Right ventricle myocardium superior (tissue), 1 donor: ENCODE measurements at regions of chr1 and their contacts with region 1.

Region 1: DNA sequence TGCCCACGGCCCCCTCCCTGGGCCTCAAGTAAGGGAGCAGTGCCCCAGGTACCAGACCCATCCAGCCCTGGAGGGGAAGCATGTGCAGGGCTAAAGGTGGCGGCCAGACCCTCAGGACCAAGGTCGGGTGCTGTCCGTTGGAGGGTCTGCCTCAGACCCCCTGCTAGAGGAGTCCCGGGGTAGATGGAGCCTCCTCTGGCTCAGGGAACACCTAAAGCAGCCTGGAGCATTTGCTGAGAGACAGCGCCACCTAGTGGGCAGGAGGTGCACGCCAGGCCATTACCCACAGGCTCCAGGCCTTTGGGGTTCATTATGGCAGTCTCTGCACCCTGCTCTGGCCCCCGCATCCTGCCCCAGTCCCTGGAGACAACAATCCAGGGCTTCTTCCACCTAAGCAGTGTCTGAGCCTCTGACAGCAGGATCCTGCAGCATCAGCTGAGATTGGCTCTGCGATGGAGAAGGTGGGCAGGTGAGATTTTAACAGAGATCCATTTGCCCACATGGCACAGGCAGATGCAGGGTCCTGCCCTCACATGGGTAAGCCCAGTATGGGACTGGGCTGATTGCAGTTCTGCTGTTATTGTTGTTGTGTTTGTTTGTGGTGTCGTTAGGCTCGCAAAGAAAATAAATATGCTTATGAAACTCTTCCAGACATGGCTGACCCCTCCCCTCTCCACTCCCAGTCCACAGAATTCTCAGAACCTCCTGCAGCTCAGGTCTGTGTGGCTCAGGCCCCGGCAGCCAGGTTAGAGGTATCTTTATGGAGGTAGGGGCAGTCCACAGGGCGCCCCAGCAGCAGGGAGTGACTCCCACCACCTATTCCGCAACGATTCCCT is 42.4 kb downstream of the CTNNBIP1 start:
- DNase-seq: peak; percentile 90
- ATAC-seq: peak; percentile 88

Region 2: GRCh38 chr1:9629445-9630201 is 238.0 kb before region 1 on chr1:
- intact Hi-C with region 1: loop called (anchors 10 kb)
- DNase-seq: peak; percentile 81
- ATAC-seq: peak; percentile 59

Region 3: GRCh38 chr1:9724706-9725476 is 142.7 kb before region 1 on chr1:
- intact Hi-C with region 1: loop called (anchors 5 kb)
- DNase-seq: peak; percentile 72
- ATAC-seq: peak; percentile 67

Region 4: DNA sequence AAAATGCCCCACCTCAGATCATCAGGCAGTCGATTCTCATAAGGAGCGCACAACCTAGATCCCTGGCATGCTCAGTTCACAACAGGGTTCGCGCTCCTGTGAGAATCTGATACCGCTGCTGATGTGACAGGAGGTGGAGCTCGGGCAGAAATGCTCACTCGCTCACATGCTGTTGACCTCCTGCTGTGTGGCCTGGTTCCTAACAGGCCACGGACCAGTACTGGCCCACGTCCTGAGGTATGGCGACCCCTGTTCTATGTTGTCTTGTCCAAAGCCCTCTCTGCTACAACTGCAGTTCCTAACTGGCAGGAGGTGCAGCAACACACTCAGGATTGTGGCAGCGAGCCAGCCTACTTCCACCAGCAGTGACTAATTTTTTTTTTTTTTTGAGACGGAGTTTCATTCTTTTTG is 114.5 kb before region 1 on chr1:
- intact Hi-C with region 1: no loop called
- DNase-seq: peak; percentile 72
- ATAC-seq: peak; percentile 27

Region 5: DNA sequence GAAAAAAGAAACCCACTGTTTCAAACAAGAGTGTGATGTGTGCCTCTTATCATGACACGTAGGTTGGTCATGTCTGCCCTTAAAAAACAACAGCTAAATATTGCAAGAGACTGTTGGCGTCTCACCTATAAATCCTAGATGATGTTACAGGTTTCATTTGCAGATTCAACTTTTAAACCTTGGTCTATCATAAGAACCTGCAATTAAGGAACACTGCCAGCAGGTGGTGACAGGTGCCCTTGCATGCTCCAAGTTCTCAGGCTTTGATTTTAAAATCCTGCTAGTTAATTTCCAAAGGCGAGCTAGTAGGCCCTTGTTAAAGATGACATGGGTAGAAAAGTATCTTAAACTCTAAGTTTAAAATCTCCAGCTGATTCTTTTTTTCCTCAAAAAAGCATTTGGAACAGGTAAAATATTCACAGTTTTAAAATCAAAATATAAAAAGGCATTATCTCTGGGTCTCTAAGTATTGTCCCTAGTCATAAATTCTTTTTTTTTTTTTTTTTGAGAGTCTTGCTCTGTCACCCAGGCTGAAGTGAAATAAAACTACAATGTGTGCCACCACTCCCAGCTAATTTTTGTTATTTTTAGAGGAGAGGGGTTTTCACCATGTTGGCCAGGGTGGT is 83.0 kb before region 1 on chr1:
- intact Hi-C with region 1: loop called (anchors 2 kb)
- DNase-seq: no peak
- ATAC-seq: no peak

Region 6: DNA sequence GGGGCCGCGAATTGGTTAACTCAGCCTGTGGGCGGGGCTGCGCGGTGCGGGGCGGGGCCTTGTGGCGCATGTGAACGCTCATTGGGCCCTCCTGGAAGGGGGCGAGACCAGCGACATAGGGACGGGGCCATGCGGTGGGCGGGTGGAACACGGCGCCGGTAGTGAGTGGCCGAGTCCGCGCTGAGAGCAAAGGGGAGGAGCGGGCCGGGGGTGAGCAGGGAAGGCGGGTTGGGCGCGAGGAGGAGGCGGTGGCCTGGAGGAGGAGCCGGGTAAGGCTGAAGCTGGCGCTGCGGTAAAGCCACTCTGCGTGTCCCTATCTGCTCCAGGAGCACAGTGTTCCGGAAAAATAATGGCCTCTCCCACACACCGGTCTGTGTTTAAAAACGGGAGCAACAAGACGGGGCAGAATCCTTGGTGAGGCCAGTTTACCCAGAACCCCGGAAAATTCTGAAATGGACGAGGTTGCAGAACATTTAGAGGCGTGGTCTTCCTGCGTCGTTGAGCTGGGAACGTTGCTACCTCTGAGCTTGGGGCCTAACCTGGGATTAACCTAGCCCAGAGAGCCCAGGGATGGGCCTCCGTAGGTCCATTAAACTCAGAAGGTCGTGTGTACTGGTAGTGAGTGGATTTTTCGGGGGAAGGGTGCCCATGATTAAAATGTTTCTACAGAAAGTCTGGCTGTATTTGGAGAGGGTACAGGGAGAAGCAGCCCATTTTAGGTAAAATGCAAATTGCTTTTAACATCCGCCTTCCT is 43.0 kb after region 1 on chr1:
- intact Hi-C with region 1: no loop called
- DNase-seq: peak; percentile 100
- ATAC-seq: peak; percentile 96